ENCODE measurements at regions of chr2 and their contacts with region 1.

Region 1: DNA sequence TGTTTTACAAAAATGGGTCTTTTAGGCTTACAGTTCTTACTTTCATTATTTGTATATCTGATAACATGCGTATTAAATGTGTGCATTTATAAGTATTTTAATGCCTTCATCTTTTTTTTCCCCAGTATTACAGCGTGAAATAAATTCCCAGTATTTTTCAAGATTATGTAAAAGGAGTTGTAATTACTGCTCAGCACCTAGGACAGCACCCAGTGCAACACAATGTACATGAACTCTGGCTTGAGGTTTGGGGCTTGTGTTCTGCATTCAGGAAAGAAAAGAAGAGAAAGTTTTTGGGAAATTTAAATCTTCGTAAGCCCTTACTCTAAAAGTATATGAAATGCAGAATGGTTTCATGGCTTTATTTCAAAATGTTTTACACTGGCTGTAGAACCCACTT is 16.7 kb downstream of the ZNF638 start:
- DNase-seq: peak; percentile 25
- H3K4me3 Mint-ChIP-seq: no peak overlapping the region
- H3K27ac Mint-ChIP-seq: no peak overlapping the region
- H3K4me1 Mint-ChIP-seq: peaks cover 23% of the 10 kb centered on the region
- H3K27me3 Mint-ChIP-seq: no peaks in the 10 kb centered on the region

Region 2: DNA sequence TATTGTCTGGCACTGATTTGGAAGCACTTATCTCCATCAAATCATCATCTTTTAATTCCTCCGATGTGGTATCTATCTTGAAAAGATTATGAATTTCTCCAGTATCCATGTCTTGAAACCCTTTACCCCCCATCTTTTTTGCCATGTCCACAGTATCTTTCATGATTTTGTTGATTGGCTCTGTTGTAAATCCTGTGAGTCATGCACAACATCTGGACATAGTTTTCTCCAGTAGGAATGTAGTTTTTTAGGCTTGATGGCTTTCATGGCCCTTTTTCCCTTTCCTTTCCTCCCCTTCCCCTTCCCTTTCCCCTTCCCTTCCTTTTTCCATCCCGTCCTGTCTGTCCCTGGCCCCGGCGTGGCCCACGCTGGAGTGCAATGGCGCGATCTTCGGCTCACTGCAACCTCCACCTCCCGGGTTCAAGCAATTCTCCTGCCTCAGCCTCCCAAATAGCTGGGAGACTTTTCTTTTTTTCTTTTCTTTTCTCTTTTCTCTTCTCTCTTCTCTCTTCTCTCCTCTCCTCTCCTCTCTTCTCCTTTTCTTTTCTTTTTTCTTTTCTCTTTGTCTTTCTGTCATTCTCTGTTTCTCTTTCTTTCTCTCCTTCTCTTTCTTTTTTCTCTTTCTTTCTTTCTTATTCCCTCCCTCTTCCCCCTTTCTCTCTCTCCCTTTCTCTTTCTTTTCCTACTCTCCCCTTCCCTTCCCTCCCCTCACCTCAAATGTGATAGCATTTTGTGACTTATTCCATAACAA is 35.1 kb before region 1 on chr2:
- CTCF ChIA-PET with region 1: no interaction called
- POLR2A ChIA-PET with region 1: no interaction called
- DNase-seq: no peak
- H3K4me3 Mint-ChIP-seq: no peak overlapping the region
- H3K27ac Mint-ChIP-seq: no peak overlapping the region
- H3K4me1 Mint-ChIP-seq: no peaks in the 10 kb centered on the region
- H3K27me3 Mint-ChIP-seq: peaks cover 21% of the 10 kb centered on the region

Region 3: DNA sequence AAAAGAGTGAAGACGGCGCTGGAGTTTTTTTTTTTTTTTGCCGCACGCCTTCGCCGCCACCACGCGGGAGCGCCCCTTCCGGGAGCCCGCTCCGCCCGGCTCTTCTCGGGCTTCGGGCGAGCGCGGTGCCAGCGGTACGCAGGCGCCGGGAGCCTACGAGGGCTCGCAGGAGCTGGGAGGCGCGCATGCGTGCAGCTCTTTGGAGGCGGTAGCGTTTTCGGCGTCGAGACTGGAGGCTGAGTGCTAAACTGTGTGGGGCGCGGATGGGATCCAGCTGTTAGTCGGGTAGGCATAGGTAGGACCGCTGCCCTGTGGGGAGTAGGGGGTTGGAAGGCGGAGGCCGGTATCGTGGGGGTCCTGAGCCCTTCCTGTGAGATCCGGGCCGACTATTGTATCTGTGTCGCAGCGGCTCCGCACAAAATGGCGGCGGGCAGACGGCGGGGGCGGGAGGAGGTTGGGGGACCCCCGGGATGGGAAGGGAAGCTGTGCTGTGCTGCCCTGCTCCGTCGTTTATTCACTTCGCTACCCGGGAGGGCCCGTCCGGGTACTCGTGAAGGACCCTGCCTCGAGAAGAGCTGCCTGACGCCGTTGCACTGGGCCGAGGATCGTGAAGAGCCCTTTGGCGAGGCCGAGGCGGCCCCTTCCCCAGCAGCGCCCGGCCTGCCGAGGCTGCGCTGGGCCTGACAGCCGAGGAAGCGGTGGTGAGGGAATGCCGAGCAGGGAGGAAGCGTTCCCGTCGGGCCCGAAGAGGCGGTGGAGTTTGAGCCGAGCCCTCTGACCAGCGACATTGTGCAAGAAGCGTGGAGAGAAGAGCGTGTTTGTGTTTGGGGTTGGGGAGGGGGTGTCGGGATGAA is 16.5 kb before region 1 on chr2 and contains the start of gene ZNF638:
- CTCF ChIA-PET with region 1: interaction called, 10 read pairs
- POLR2A ChIA-PET with region 1: no interaction called
- DNase-seq: peak; percentile 92
- H3K4me3 Mint-ChIP-seq: peak within 1 kb of the TSS; percentile 100
- H3K27ac Mint-ChIP-seq: peak within 1 kb of the TSS; percentile 100
- H3K4me1 Mint-ChIP-seq: peaks cover 26% of the 10 kb centered on the region
- H3K27me3 Mint-ChIP-seq: peaks cover 6% of the 10 kb centered on the region
- total RNA-seq, gene ZNF638: 87.6 to 101 TPM

Region 4: DNA sequence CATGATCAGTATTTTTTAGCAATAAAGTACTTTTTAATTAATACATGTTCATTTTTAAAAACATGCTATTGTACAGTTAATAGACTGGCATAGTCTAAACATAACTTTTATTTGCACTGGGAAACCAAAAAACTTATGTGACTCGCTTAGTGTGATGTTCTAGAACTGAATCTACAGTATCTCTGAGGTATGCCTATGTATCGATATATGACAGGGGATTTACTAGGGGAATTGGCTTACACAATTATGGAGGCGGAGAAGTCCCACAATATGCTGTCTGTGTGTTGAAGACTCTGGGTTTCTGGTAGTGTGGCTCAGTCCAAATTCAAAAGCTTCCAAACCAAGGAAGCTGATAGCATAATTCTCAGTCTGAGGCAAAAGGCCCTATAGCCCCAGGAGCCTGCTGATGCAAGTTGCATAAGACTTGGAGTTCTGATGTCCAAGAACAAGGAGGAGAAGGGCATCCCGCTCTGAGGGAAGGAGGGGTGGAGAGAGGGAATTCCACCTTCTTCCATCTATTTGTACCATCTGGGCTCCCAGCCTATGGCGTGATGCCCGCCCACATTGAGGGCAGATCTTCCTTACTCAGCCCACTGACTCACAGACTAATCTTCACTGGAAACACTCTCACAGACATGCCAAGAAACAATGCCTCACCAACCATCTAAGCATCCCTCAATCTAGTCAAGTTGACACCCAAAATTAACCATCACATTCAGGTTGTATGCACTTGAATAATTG is 10.8 kb after region 1 on chr2:
- CTCF ChIA-PET with region 1: interaction called, 11 read pairs
- POLR2A ChIA-PET with region 1: no interaction called
- DNase-seq: no peak
- H3K4me3 Mint-ChIP-seq: no peak overlapping the region
- H3K27ac Mint-ChIP-seq: no peak overlapping the region
- H3K4me1 Mint-ChIP-seq: peaks cover 4% of the 10 kb centered on the region
- H3K27me3 Mint-ChIP-seq: no peaks in the 10 kb centered on the region